Activated CD8-positive, alpha-beta T cell treated with anti-CD3 and anti-CD28 coated beads, Interleukin-2, amount 10 ng/mL, durations not matched to agents 7 days and 5 days (primary cell): ENCODE measurements at regions of chr6 and their contacts with region 1.

Region 1: GRCh38 chr6:27138837-27139755 is 108.4 kb upstream of the PRSS16 start:
- DNase-seq: peak; percentile 87
- ATAC-seq: peak; percentile 68
- H3K4me3 Mint-ChIP-seq: peak overlapping the region; percentile 95
- H3K27ac Mint-ChIP-seq: peak overlapping the region; percentile 98
- H3K4me1 Mint-ChIP-seq: peaks cover 71% of the 10 kb centered on the region
- H3K27me3 Mint-ChIP-seq: no peaks in the 10 kb centered on the region

Region 2: DNA sequence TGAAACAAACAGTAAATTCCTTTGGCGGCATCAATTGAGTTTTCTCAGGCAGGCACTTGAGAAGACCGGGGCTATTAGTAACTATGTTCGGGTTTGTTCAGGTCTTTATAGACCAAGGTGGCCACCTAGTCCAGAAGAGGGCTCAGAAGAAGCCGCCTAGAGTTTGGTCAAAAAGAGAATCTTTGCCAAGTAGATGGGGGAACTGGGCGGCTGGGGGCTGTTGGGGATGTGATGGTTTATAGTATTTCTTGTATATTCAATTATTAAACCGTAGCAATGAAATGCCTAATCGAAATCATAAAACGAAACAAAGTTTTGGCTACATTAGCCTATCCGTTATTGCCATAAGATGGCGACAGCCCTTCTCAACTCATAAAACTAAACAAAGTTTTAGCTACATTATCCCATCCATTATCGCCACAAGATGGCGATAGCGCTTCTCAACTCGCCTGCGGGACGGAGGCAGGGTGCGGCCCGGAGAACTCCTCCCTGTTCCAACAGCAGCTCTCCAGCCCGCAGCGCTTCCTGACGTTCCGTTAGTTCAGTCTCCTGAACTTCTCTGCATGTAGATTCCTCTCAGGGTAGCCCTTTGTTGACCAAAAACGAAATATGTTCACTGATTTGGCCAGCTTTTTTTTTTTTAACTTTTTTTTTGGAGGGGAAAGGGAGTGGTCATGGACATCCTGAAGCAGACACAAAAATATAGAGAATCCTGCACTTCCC is 12.1 kb before region 1 on chr6:
- CTCF ChIA-PET with region 1: interaction called, 28 read pairs
- POLR2A ChIA-PET with region 1: interaction called, 1,009 read pairs
- DNase-seq: peak; percentile 92
- ATAC-seq: peak; percentile 67
- H3K4me3 Mint-ChIP-seq: peak overlapping the region; percentile 81
- H3K27ac Mint-ChIP-seq: peak overlapping the region; percentile 88
- H3K4me1 Mint-ChIP-seq: peaks cover 54% of the 10 kb centered on the region
- H3K27me3 Mint-ChIP-seq: no peaks in the 10 kb centered on the region

Region 3: DNA sequence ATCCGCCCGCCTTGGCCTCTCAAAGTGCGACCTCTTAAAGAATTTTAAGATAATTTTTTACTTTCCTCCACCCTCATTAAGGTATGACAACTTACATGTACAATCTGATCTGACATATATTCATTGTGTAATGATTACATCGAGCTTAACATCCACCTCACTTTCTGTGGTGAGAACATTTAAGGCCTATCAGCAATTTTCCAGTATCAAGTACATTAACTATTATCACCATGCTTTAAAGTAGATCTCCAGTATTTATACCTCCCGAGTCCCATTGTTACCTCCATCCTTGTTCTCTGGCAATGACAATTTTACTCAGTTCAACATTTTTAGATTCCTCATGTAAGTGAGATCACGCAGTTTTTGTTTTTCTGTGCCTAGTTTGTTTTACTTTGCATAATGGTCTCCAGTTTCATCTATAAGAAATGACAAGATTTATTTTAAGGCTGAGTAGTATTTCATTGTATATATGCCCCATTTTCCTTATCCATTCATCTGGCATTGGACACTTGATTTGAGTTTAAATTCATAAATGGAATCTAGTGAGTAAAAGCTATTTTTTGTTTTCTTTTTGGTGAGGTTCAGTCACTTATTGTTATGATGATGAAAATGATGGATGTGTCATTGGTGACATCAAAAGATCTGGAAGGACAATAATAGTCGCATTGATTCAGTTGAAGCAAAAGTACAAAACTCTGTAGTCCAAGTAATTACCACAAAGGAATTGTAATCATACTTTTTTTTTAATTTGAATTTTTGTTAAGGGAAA is 686.1 kb after region 1 on chr6:
- CTCF ChIA-PET with region 1: no interaction called
- POLR2A ChIA-PET with region 1: interaction called, 55 read pairs
- DNase-seq: no peak
- ATAC-seq: peak; percentile 3
- H3K4me3 Mint-ChIP-seq: peak overlapping the region; percentile 93
- H3K27ac Mint-ChIP-seq: peak overlapping the region; percentile 99
- H3K4me1 Mint-ChIP-seq: peaks cover 45% of the 10 kb centered on the region
- H3K27me3 Mint-ChIP-seq: no peaks in the 10 kb centered on the region

Region 4: DNA sequence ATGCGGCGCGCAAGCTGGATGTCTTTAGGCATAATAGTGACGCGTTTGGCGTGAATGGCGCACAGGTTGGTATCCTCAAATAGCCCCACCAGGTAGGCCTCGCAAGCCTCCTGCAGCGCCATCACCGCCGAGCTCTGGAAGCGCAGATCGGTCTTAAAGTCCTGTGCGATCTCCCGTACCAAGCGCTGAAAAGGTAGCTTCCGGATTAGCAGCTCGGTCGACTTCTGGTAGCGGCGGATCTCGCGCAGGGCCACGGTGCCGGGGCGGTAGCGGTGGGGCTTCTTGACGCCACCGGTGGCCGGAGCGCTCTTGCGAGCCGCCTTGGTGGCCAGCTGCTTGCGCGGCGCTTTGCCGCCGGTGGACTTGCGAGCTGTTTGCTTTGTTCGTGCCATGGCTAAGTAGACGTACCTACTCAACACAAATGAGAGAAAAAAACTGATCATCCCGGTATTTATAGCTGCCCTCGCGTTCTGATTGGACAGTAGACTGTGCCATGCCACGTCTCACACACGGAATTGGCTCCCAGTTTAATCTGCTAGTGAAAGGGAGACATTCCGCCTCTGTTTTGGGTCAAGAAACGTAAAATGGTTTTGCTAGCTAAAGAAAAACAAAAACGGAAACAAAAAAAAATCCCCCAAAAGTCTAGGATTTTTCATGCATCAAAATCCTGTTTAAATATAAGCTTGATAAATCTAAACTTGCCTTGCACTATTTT is 733.0 kb after region 1 on chr6:
- CTCF ChIA-PET with region 1: no interaction called
- POLR2A ChIA-PET with region 1: interaction called, 291 read pairs
- DNase-seq: peak; percentile 92
- ATAC-seq: peak; percentile 62
- H3K4me3 Mint-ChIP-seq: peak overlapping the region; percentile 85
- H3K27ac Mint-ChIP-seq: peak overlapping the region; percentile 99
- H3K4me1 Mint-ChIP-seq: peaks cover 64% of the 10 kb centered on the region
- H3K27me3 Mint-ChIP-seq: no peaks in the 10 kb centered on the region